Activated CD4-positive, alpha-beta memory T cell treated with anti-CD3 and anti-CD28 coated beads for 36 hours (primary cell): ENCODE measurements at regions of chr2 and their contacts with region 1.

Region 1: GRCh38 chr2:64750817-64751285 is 97.1 kb upstream of the SERTAD2 start:
- DNase-seq: peak; percentile 99
- H3K4me3 Mint-ChIP-seq: peak overlapping the region; percentile 95
- H3K27ac Mint-ChIP-seq: peak overlapping the region; percentile 89
- H3K4me1 Mint-ChIP-seq: peaks cover 22% of the 10 kb centered on the region
- H3K27me3 Mint-ChIP-seq: no peaks in the 10 kb centered on the region

Region 2: GRCh38 chr2:64653349-64654062 is 97.3 kb before region 1 on chr2 and contains the start of gene SERTAD2:
- CTCF ChIA-PET with region 1: interaction called, 30 read pairs
- POLR2A ChIA-PET with region 1: interaction called, 42 read pairs
- intact Hi-C with region 1: loop called (anchors 1 kb)
- DNase-seq: peak; percentile 86
- H3K4me3 Mint-ChIP-seq: peak within 1 kb of the TSS; percentile 79
- H3K27ac Mint-ChIP-seq: peak within 1 kb of the TSS; percentile 72
- H3K4me1 Mint-ChIP-seq: peaks cover 51% of the 10 kb centered on the region
- H3K27me3 Mint-ChIP-seq: no peaks in the 10 kb centered on the region
- total RNA-seq, gene SERTAD2: 11.3 to 11.4 TPM

Region 3: GRCh38 chr2:64730551-64731262 is 20.1 kb before region 1 on chr2:
- CTCF ChIA-PET with region 1: interaction called, 5 read pairs
- POLR2A ChIA-PET with region 1: interaction called, 4 read pairs
- intact Hi-C with region 1: loop called (anchors 1 kb)
- DNase-seq: peak; percentile 47
- H3K4me3 Mint-ChIP-seq: peak overlapping the region; percentile 80
- H3K27ac Mint-ChIP-seq: peak overlapping the region; percentile 83
- H3K4me1 Mint-ChIP-seq: peaks cover 42% of the 10 kb centered on the region
- H3K27me3 Mint-ChIP-seq: no peaks in the 10 kb centered on the region

Region 4: GRCh38 chr2:64819774-64820696 is 69.2 kb after region 1 on chr2:
- CTCF ChIA-PET with region 1: no interaction called
- POLR2A ChIA-PET with region 1: interaction called, 4 read pairs
- intact Hi-C with region 1: loop called (anchors 1 kb)
- DNase-seq: peak; percentile 83
- H3K4me3 Mint-ChIP-seq: peak overlapping the region; percentile 36
- H3K27ac Mint-ChIP-seq: peak overlapping the region; percentile 82
- H3K4me1 Mint-ChIP-seq: peaks cover 20% of the 10 kb centered on the region
- H3K27me3 Mint-ChIP-seq: no peaks in the 10 kb centered on the region

Region 5: DNA sequence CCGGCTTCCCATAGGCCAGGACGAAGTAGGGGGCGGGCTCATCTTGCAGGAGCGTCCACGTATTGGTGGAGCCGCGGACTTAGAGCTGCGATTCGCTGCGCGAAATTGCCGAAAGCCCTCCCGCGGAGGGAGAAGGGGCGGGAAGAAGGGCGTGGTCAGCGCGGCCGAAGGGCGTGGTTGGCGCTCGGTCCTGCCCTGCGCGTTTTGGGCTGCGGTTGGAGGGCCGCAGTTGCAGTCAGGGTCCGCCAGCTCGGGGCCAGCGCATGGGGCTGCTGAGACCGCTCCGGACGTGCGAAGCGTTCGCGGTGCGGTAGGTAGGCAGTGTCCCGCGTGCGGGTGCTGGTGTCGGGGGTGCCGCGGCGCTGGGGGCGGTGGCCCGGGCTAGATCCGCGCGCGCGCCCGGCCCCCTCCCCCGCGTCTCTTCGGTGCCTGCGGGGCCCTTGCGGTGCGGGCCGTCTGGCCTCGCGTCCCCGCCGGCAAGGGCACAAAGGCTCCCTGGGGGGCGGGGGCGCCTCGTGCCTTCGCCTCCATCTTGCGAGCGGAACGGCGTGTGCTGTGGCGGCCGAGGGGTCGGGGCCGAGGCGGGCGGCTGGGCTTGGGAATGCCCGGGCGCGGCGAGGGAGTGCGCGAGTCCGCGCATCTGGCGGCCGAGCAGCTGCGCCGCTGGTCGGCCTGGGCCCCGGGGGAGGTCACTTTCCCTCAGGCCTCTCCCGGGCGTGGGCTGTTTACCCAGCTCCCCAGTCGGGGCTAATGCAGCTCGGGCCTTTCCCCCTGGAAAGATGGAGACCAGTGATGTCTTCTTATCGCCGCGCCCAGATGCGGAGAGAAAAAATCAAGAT is 305.6 kb after region 1 on chr2 and contains the start of gene CEP68:
- CTCF ChIA-PET with region 1: interaction called, 3 read pairs
- POLR2A ChIA-PET with region 1: no interaction called
- intact Hi-C with region 1: loop called (anchors 5 kb)
- DNase-seq: peak; percentile 98
- H3K4me3 Mint-ChIP-seq: peak within 1 kb of the TSS; percentile 94
- H3K27ac Mint-ChIP-seq: peak within 1 kb of the TSS; percentile 78
- H3K4me1 Mint-ChIP-seq: peaks cover 50% of the 10 kb centered on the region
- H3K27me3 Mint-ChIP-seq: no peaks in the 10 kb centered on the region
- total RNA-seq, gene CEP68: 6.6 to 8.0 TPM